Tibial artery (tissue), 4 donors: ENCODE measurements at regions of chr1 and their contacts with region 1.

Region 1: DNA sequence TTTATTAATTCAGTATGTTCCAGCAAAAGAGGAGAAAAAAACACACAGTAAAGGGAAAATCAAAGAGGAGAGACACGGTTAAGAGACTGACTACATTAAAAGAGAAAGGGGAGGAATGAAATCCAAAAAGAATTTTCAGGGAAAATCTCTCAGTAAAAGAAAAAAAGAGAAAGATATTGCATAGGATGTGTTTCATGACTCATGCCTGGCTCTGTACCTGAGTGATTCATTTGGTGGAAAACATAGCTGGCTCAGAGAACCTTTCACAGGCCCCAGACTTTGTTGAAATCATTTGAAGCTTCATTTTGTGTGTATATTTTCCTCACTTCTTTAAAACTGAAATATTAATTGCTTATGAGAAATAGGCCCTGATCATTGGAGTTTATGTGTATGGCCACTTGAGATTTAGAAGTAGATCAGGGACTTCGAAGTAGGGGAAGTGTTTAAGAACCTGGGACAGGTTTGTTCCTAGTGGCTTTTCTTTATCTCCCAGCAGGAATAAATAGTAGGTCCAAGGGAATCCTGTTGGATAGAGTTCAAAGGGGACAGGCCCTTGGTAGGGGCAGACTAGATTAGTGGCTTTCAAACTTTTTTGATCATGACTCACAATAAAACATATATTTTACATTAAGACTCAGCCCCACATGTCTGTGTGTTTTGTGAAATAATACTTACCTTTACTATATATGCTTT is 239.1 kb upstream of the SGIP1 start:
- DNase-seq: no peak
- H3K4me3 ChIP-seq: no peak overlapping the region
- H3K27ac ChIP-seq: peak overlapping the region in 1 of 2 donors; percentile 27
- H3K4me1 ChIP-seq: peaks cover 0 to 8% (median 0%) of the 10 kb centered on the region in 4 donors
- H3K27me3 ChIP-seq: no peaks in the 10 kb centered on the region
- CTCF ChIP-seq: no peak

Region 2: DNA sequence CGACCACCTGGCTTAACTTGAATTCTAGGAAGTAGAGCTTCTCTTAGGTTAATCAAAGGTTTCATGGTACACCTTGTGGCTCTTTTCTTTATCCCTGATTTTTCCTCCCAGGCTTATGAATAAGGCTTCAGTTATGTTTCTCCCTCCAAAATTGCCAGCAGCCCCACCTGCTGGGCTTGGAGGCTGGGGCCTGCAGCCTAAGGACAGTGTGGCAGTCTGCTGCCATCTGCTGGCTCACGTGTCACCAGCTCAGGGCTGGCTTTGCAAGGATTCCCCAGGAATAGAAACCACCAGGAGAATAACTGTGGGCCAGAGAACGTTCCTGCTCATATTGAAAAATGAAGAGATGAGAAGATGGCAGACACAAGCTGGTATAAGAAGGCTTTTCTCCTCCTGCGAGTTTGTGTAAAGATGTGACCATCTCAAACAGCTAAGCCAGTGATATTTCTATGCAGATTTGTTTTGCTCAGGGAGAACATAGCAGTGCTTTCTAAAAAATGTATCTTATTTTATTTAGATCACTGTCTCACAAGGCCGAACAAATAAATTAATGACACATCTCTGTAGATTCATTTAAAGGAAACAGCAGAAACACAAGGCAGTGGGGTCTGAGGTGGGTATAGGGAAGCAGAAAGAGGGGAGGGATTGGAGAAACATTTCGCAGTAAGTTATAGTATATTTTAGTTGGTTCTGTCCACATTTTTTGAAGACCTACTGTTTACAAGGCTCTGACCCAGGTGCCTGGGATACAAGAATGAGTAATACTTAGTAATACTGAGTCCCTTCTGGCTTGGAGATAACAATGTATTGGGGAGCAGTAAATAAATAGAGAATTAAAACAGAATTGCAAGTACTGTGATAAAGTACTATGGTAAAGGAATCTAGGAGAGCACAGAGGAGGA is 51.9 kb before region 1 on chr1:
- intact Hi-C with region 1: loop called (anchors 5 kb)
- DNase-seq: peak; percentile 84 to 88
- H3K4me3 ChIP-seq: no peak overlapping the region
- H3K27ac ChIP-seq: no peak overlapping the region
- H3K4me1 ChIP-seq: peaks cover 0 to 4% (median 4%) of the 10 kb centered on the region in 4 donors
- H3K27me3 ChIP-seq: peaks cover 0 to 6% of the 10 kb centered on the region in 2 donors
- CTCF ChIP-seq: peak; percentile 96

Region 3: GRCh38 chr1:66916320-66916719 is 621.5 kb after region 1 on chr1:
- intact Hi-C with region 1: no loop called
- DNase-seq: no peak
- H3K4me3 ChIP-seq: no peak overlapping the region
- H3K27ac ChIP-seq: no peak overlapping the region
- H3K4me1 ChIP-seq: peaks cover 0 to 11% (median 2%) of the 10 kb centered on the region in 4 donors
- H3K27me3 ChIP-seq: no peaks in the 10 kb centered on the region
- CTCF ChIP-seq: no peak